K562 (cell line): ENCODE measurements at regions of chr1 and their contacts with region 1.

Region 1: DNA sequence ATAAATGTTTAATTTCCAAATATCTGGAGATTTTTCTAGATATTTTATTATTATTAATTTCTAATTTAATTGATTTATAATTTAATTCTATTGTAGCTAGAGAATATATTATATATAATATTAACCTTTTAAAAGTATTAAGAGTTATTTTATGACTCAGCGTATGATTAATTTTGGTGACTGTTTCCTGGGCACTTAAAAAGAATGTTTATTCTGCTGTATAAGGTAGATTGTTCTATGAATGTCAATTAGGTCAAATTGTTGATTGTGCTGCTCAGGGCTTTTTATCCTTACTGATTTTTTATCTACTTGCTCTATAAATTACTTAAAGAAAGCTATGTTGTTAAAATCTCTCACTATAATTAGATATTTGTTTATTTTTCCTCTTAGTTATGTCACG is 20.1 kb upstream of the GJA8 start:
- DNase-seq: no peak
- ATAC-seq: no peak
- H3K4me3 ChIP-seq: no peak overlapping the region
- H3K27ac ChIP-seq: no peak overlapping the region
- H3K4me1 ChIP-seq: no peaks in the 10 kb centered on the region
- H3K27me3 ChIP-seq: no peaks in the 10 kb centered on the region
- CTCF ChIP-seq: no peak
- EP300 ChIP-seq: no peak
- POLR2A ChIP-seq: no peak
- RAD21 ChIP-seq: no peak

Region 2: GRCh38 chr1:147700042-147701006 is 182.2 kb before region 1 on chr1:
- CTCF ChIA-PET with region 1: no interaction called
- POLR2A ChIA-PET with region 1: no interaction called
- in situ Hi-C with region 1: no loop called
- intact Hi-C with region 1: no loop called
- DNase-seq: peak; percentile 43 to 50 (median 47)
- ATAC-seq: peak; percentile 88
- H3K4me3 ChIP-seq: no peak overlapping the region
- H3K27ac ChIP-seq: no peak overlapping the region
- H3K4me1 ChIP-seq: no peaks in the 10 kb centered on the region
- H3K27me3 ChIP-seq: peaks cover 0 to 15% of the 10 kb centered on the region in 2 experiments; a peak in 2 of 5 replicates
- CTCF ChIP-seq: peak; percentile 73 to 81 (median 73)
- EP300 ChIP-seq: no peak
- POLR2A ChIP-seq: no peak
- RAD21 ChIP-seq: peak; percentile 54 to 65

Region 3: GRCh38 chr1:147723691-147724323 is 158.7 kb before region 1 on chr1:
- CTCF ChIA-PET with region 1: no interaction called
- POLR2A ChIA-PET with region 1: no interaction called
- in situ Hi-C with region 1: loop called (anchors 10 kb)
- intact Hi-C with region 1: no loop called
- DNase-seq: peak in 3 of 4 experiments; percentile 12 to 41 (median 36)
- ATAC-seq: peak; percentile 85
- H3K4me3 ChIP-seq: no peak overlapping the region
- H3K27ac ChIP-seq: no peak overlapping the region
- H3K4me1 ChIP-seq: no peaks in the 10 kb centered on the region
- H3K27me3 ChIP-seq: peaks cover 0 to 20% of the 10 kb centered on the region in 2 experiments; a peak in 4 of 5 replicates
- CTCF ChIP-seq: peak; percentile 64 to 65 (median 65)
- EP300 ChIP-seq: no peak
- POLR2A ChIP-seq: no peak
- RAD21 ChIP-seq: peak; percentile 70 to 86

Region 4: GRCh38 chr1:147808025-147808424 is 74.5 kb before region 1 on chr1:
- CTCF ChIA-PET with region 1: no interaction called
- POLR2A ChIA-PET with region 1: no interaction called
- in situ Hi-C with region 1: no loop called
- intact Hi-C with region 1: no loop called
- DNase-seq: no peak
- ATAC-seq: no peak
- H3K4me3 ChIP-seq: no peak overlapping the region
- H3K27ac ChIP-seq: no peak overlapping the region
- H3K4me1 ChIP-seq: no peaks in the 10 kb centered on the region
- H3K27me3 ChIP-seq: peaks cover 4 to 13% of the 10 kb centered on the region in 2 experiments; a peak in 3 of 5 replicates
- CTCF ChIP-seq: no peak
- EP300 ChIP-seq: no peak
- POLR2A ChIP-seq: no peak
- RAD21 ChIP-seq: no peak

Region 5: DNA sequence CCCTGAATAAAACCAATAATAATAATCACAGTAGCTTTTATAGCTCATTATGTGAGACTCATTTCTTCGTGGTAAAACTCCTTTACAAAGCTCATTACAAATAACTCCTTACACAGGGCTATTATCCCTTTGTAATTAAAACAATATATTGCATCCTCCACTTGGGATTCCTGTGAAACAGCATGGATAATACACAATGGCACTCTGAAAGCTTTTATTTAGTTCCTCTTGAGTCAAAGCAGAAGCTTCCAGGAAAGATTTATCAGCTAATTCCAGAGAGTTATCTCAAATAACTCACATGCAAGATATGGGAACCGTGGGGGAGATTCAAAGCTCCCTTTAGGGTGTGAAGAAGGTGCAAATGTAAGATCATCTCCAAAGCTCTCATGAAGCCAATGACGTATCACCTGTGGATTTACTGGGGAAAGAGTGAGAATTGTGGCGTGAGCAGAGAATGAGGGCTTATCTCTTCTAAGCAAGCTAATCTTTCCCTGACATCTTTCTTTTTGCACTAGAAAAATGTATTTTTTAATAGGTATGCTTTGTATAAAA is 61.7 kb before region 1 on chr1:
- CTCF ChIA-PET with region 1: no interaction called
- POLR2A ChIA-PET with region 1: no interaction called
- in situ Hi-C with region 1: no loop called
- intact Hi-C with region 1: no loop called
- DNase-seq: peak in 1 of 4 experiments; percentile 20
- ATAC-seq: no peak
- H3K4me3 ChIP-seq: no peak overlapping the region
- H3K27ac ChIP-seq: no peak overlapping the region
- H3K4me1 ChIP-seq: no peaks in the 10 kb centered on the region
- H3K27me3 ChIP-seq: peaks cover 0 to 14% of the 10 kb centered on the region in 2 experiments; a peak in 1 of 5 replicates
- CTCF ChIP-seq: no peak
- EP300 ChIP-seq: no peak
- POLR2A ChIP-seq: no peak
- RAD21 ChIP-seq: no peak